Colonic mucosa (tissue), 4 donors: ENCODE measurements at regions of chr18 and their contacts with region 1.

Region 1: GRCh38 chr18:13629841-13630715 is 96.3 kb downstream of the FAM210A start:
- DNase-seq: peak; percentile 49
- H3K4me3 ChIP-seq: no peak overlapping the region
- H3K27ac ChIP-seq: no peak overlapping the region
- H3K4me1 ChIP-seq: no peaks in the 10 kb centered on the region
- H3K27me3 ChIP-seq: no peaks in the 10 kb centered on the region
- CTCF ChIP-seq: peak; percentile 68

Region 2: GRCh38 chr18:13112982-13113381 is 517.1 kb before region 1 on chr18:
- intact Hi-C with region 1: loop called (anchors 10 kb)
- DNase-seq: no peak
- H3K4me3 ChIP-seq: no peak overlapping the region
- H3K27ac ChIP-seq: no peak overlapping the region
- H3K4me1 ChIP-seq: no peaks in the 10 kb centered on the region
- H3K27me3 ChIP-seq: no peaks in the 10 kb centered on the region
- CTCF ChIP-seq: peak; percentile 28

Region 3: DNA sequence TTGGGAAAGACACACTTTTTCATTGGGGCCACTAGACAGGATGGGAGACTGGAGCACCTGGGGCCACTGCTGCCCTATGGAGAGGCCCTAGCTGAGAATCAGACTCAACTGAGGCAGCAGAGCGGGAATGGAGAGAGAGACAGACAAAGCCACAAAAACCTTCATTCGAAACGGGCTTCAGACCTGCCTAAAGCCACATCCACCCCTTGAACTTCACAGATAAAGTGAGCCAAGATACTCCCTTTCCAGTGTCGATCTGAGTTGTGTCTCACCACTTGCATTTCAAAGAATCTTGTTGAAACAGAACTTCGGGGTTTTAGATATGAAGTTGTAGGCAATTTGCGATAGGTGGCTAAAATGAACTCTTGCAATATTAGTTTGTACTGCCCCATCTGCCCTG is 422.8 kb before region 1 on chr18:
- intact Hi-C with region 1: loop called (anchors 5 kb)
- DNase-seq: no peak
- H3K4me3 ChIP-seq: no peak overlapping the region
- H3K27ac ChIP-seq: no peak overlapping the region
- H3K4me1 ChIP-seq: no peaks in the 10 kb centered on the region
- H3K27me3 ChIP-seq: no peaks in the 10 kb centered on the region
- CTCF ChIP-seq: no peak

Region 4: GRCh38 chr18:13216092-13216582 is 413.9 kb before region 1 on chr18:
- intact Hi-C with region 1: loop called (anchors 5 kb)
- DNase-seq: peak; percentile 87
- H3K4me3 ChIP-seq: no peak overlapping the region
- H3K27ac ChIP-seq: no peak overlapping the region
- H3K4me1 ChIP-seq: peaks cover 23% of the 10 kb centered on the region
- H3K27me3 ChIP-seq: no peaks in the 10 kb centered on the region
- CTCF ChIP-seq: peak; percentile 66

Region 5: DNA sequence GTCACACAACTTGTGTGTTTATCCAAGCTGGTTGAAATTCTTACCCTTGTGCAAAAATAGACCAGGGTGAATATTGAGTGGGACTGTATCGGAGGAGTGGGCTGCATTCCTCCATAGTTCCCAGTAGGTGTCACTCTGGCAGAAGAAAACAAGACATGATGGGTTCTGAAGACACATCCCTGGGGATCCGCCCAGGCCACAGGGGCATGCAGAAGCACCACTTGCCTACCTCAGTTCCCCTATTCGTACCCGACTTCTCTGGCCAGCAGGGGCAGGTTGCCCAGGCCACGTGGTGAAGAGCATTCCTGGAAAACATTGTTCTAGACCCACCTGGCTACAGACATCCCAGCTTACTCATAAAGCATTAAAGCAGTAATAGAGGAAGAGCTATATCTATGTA is 72.0 kb before region 1 on chr18:
- intact Hi-C with region 1: loop called (anchors 5 kb)
- DNase-seq: no peak
- H3K4me3 ChIP-seq: no peak overlapping the region
- H3K27ac ChIP-seq: no peak overlapping the region
- H3K4me1 ChIP-seq: no peaks in the 10 kb centered on the region
- H3K27me3 ChIP-seq: no peaks in the 10 kb centered on the region
- CTCF ChIP-seq: peak; percentile 33

Region 6: GRCh38 chr18:13577091-13577697 is 52.9 kb before region 1 on chr18:
- intact Hi-C with region 1: no loop called
- DNase-seq: no peak
- H3K4me3 ChIP-seq: no peak overlapping the region
- H3K27ac ChIP-seq: no peak overlapping the region
- H3K4me1 ChIP-seq: no peaks in the 10 kb centered on the region
- H3K27me3 ChIP-seq: no peaks in the 10 kb centered on the region
- CTCF ChIP-seq: no peak

Region 7: GRCh38 chr18:13725566-13726231 is 95.6 kb after region 1 on chr18:
- intact Hi-C with region 1: no loop called
- DNase-seq: peak; percentile 39
- H3K4me3 ChIP-seq: peak overlapping the region; percentile 99
- H3K27ac ChIP-seq: peak overlapping the region; percentile 92
- H3K4me1 ChIP-seq: no peaks in the 10 kb centered on the region
- H3K27me3 ChIP-seq: no peaks in the 10 kb centered on the region
- CTCF ChIP-seq: no peak

Region 8: GRCh38 chr18:13746633-13747032 is 116.6 kb after region 1 on chr18:
- intact Hi-C with region 1: no loop called
- DNase-seq: no peak
- H3K4me3 ChIP-seq: no peak overlapping the region
- H3K27ac ChIP-seq: no peak overlapping the region
- H3K4me1 ChIP-seq: no peaks in the 10 kb centered on the region
- H3K27me3 ChIP-seq: no peaks in the 10 kb centered on the region
- CTCF ChIP-seq: no peak